ENCODE measurements at regions of chr15 and their contacts with region 1.

Region 1: GRCh38 chr15:55168329-55168974 is 28.3 kb downstream of the RSL24D1 start:
- DNase-seq: peak; percentile 78
- H3K4me3 ChIP-seq: no peak overlapping the region
- H3K27ac ChIP-seq: no peak overlapping the region
- H3K4me1 ChIP-seq: no peaks in the 10 kb centered on the region
- H3K27me3 ChIP-seq: no peaks in the 10 kb centered on the region
- CTCF ChIP-seq: peak; percentile 89

Region 2: DNA sequence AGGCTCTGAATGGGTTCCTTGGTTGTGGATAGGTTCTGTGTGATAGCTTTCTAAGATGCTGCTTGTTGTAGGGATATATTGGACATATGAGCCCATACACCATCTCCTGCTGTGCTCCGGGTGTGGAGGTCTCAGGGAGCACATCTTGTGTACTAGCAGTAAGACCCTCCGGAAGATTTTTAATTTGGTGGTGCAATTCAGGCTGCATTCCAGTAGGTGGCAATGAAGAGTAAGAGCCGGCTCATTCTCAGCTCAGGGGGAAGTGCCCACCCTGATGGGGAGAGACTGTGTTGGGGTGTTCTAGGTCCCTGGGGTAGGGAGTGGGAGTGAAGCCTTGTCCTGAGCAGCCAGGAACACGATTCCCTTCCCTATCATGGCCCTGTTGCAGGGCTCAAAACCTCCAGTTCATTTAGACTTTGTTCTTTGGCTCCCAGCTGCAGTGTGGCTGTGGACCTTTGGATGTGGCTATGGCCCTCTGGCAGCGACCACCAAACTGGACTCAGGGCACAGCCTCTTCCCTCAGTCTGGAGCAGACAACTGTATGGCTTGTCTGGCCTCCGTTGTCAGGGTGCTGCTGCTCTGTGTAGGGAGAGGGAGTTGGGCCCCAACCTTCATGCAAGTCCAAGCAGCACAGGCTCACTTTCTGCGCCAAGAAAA is 1085.5 kb before region 1 on chr15:
- CTCF ChIA-PET with region 1: no interaction called
- POLR2A ChIA-PET with region 1: no interaction called
- intact Hi-C with region 1: loop called (anchors 10 kb)
- DNase-seq: peak; percentile 37
- H3K4me3 ChIP-seq: no peak overlapping the region
- H3K27ac ChIP-seq: no peak overlapping the region
- H3K4me1 ChIP-seq: no peaks in the 10 kb centered on the region
- H3K27me3 ChIP-seq: no peaks in the 10 kb centered on the region
- CTCF ChIP-seq: peak; percentile 75

Region 3: DNA sequence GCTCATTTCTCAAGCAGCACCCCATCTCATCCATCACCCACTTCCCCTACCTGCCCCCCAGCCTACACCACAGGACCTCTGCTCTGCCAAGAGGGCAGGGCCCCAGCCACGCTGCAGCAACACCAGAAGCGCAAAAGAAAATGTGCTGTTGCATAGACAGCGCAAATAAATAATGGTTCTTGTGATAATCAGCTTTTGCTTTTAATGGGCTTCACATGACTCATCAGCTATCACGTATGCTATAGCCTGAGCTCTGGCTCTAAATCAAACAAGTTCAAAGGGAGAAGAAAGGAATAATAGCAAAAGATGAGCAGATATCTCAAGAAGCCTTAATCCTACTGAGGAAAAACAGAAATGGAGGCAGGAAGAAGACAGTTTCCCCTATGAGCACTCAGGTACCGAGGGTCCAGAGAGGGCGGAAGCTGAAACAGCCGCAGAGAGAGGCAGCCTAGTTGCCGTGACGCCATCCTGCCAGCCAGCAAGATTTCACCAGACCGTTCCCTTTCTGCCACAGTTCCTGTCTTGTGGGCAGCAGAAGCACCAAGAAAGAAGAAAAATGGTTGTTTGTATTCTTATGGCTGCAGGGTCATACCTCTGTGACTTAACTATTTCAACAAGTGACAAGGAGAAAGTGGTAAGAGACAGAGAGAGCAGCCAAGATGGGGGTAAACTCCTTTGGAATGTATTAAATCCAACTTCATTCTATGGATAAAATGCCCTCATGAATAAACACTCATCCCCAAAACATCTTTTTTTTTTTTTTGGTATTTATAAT is 99.1 kb after region 1 on chr15:
- CTCF ChIA-PET with region 1: no interaction called
- POLR2A ChIA-PET with region 1: no interaction called
- intact Hi-C with region 1: no loop called
- DNase-seq: peak; percentile 17
- H3K4me3 ChIP-seq: no peak overlapping the region
- H3K27ac ChIP-seq: no peak overlapping the region
- H3K4me1 ChIP-seq: no peaks in the 10 kb centered on the region
- H3K27me3 ChIP-seq: no peaks in the 10 kb centered on the region
- CTCF ChIP-seq: no peak

Region 4: GRCh38 chr15:55576943-55577342 is 408.5 kb after region 1 on chr15:
- CTCF ChIA-PET with region 1: no interaction called
- POLR2A ChIA-PET with region 1: no interaction called
- intact Hi-C with region 1: no loop called
- DNase-seq: no peak
- H3K4me3 ChIP-seq: no peak overlapping the region
- H3K27ac ChIP-seq: no peak overlapping the region
- H3K4me1 ChIP-seq: no peaks in the 10 kb centered on the region
- H3K27me3 ChIP-seq: peaks cover 6% of the 10 kb centered on the region
- CTCF ChIP-seq: no peak

Measured in A673 (cell line).